Lower leg skin (tissue), 4 donors: ENCODE measurements at regions of chr6 and their contacts with region 1.

Region 1: DNA sequence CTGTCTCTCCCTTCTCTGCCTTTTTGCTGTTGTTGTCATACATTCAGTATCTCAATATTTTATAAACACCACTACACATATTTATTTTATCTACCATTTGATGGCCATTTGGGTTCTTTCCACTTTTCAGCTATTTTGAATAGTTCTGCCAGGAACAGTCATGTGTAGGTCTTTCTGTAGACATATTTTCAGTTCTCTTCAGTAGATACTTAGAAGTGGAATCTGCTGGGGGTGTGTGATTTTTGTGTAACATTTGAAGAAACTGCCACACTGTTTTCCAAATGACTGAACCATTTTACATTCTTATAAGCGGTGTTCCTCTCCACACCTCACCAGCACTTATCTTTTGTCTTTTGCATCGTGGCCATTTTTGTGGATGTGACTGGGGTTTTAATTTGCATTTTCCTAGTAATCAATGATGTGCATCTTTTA is 197.7 kb downstream of the ARID1B start:
- DNase-seq: no peak
- H3K4me3 ChIP-seq: no peak overlapping the region
- CTCF ChIP-seq: no peak
- POLR2A ChIP-seq: no peak

Region 2: GRCh38 chr6:156955494-156956183 is 19.2 kb before region 1 on chr6:
- intact Hi-C with region 1: loop called (anchors 1 kb)
- DNase-seq: peak in 1 of 2 donors; percentile 48
- H3K4me3 ChIP-seq: no peak overlapping the region
- CTCF ChIP-seq: no peak
- POLR2A ChIP-seq: no peak